AG04449 (cell line): ENCODE measurements at regions of chrX and their contacts with region 1.

Region 1: DNA sequence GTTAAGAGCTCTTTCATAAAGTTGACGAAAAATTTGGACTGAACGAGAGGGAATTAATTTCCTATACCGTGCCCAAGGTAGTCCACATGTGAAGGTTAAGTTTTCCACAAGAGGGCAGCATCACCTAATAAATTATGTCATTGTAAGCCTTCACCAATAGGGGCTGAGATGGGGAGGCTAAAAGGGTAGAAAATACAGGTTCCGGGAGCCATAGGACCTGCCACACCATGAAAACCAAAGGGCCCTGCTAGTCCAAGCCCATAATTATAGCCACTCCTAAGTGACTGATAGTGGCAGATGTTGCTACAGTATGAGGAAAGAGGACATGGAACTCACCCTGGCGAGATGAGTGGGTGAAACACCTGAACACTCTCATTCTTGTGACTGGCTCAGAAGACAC is 122.2 kb downstream of the SHROOM4 start:
- DNase-seq: no peak
- H3K4me3 ChIP-seq: no peak overlapping the region
- CTCF ChIP-seq: peak; percentile 29

Region 2: DNA sequence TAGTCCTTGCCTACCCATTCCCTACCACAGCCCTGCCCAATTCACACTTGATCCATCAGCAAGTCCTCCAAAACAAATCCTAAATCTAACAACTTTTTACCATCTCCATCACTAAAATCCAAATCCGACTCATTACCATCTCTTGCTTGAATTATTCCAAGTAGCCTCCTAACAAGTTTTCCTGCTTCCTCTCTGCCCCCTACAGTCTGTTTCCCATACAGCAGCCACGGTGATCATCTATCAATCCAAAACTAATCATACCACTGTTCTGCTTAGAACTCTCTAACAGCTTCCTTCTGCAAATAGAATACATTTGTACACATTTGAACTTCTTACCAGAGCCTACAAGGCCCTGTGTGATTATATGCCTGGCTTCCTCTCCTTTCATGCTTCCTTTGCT is 10.8 kb before region 1 on chrX:
- CTCF ChIA-PET with region 1: interaction called, 22 read pairs
- POLR2A ChIA-PET with region 1: no interaction called
- DNase-seq: no peak
- H3K4me3 ChIP-seq: no peak overlapping the region
- CTCF ChIP-seq: no peak

Region 3: DNA sequence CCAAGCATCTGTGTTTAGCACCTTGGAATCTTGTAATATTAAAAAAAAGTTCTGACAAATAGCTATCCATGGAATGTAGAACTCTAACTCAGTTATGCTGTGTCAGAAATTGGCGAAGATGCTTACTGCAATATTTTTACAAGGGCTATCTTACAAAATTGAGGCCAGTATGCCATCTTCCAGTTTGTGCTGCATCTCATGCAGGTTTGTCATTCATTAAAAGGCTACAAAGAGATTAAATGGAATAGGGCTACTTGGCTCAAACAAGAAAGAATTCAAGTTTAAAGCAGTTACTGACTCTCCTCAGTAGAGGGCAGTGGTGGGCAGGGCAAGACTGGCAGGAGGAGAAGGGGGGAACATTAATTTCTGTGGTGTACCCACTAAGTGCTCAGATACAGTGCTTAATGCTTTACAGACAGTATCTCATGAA is 55.7 kb after region 1 on chrX:
- CTCF ChIA-PET with region 1: interaction called, 22 read pairs
- POLR2A ChIA-PET with region 1: no interaction called
- DNase-seq: peak; percentile 64
- H3K4me3 ChIP-seq: no peak overlapping the region
- CTCF ChIP-seq: peak; percentile 56

Region 4: GRCh38 chrX:50905334-50905733 is 213.5 kb after region 1 on chrX:
- CTCF ChIA-PET with region 1: interaction called, 30 read pairs
- POLR2A ChIA-PET with region 1: no interaction called
- DNase-seq: no peak
- H3K4me3 ChIP-seq: no peak overlapping the region
- CTCF ChIP-seq: no peak

Region 5: GRCh38 chrX:50920132-50920531 is 228.3 kb after region 1 on chrX:
- CTCF ChIA-PET with region 1: interaction called, 11 read pairs
- POLR2A ChIA-PET with region 1: no interaction called
- DNase-seq: no peak
- H3K4me3 ChIP-seq: no peak overlapping the region
- CTCF ChIP-seq: peak; percentile 19

Region 6: GRCh38 chrX:50988649-50989048 is 296.8 kb after region 1 on chrX:
- CTCF ChIA-PET with region 1: interaction called, 10 read pairs
- POLR2A ChIA-PET with region 1: no interaction called
- DNase-seq: no peak
- H3K4me3 ChIP-seq: no peak overlapping the region
- CTCF ChIP-seq: peak; percentile 36

Region 7: DNA sequence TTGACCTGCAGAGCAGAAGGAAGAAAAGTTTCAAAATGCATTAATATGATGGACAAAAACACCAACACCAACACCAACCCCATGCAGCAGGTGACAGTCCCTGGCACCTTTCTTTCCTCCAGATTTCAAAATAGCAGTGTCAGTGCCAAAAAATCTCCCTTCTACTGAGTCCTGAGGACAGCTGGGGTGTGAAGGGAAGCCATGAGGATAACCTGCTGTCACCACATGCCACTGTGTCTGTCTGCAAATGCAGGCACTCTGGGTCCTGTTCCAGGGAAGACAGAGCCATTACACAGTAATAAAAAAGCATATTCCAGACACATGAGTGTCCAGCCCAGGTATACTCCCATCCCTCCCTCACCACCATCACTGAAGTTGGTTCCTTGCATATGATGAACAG is 406.2 kb after region 1 on chrX:
- CTCF ChIA-PET with region 1: no interaction called
- POLR2A ChIA-PET with region 1: no interaction called
- DNase-seq: no peak
- H3K4me3 ChIP-seq: no peak overlapping the region
- CTCF ChIP-seq: no peak